Mammary epithelial cell (primary cell): ENCODE measurements at regions of chr12 and their contacts with region 1.

Region 1: DNA sequence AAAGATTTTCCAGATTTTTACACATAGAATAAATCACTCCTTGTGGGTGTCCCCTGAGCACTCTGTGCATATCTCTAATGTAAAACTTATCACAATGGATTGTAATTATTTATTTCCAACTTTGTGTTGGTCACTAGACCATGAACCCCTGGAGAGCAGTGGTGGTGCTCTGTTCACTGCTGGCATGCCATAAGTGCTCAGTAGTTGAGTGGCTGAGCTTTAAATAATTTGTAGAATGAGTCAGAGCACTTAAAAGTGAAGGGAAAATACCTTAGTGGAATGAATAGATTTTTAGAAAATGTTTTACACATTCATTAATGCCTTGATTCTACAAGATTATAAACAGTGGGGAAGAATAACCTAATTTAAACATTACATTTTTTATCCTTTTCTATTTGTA is 6.3 kb downstream of the MGAT4C start:
- DNase-seq: no peak
- H3K4me3 ChIP-seq: no peak overlapping the region
- H3K27ac ChIP-seq: no peak overlapping the region
- H3K4me1 ChIP-seq: no peaks in the 10 kb centered on the region
- H3K27me3 ChIP-seq: no peaks in the 10 kb centered on the region
- CTCF ChIP-seq: no peak

Region 2: DNA sequence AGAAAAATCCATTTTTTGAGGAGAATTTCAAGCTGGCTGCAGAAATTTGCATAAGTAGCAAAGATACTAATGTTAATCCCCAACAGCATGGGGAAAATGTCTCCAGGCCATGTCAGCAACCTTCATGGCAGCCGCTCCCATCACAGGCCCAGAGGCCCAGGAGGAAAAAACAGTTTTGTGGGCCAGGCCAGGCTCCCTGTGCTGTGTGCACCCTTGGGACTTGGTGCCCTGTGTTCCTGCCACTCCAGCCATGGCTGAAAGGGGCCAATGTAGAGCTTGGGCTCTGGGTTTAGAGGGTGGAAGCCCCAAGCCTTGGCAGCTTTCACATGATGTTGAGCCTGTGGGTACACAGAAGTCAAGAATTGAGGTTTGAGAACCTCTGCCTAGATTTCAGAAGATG is 70.0 kb before region 1 on chr12:
- CTCF ChIA-PET with region 1: no interaction called
- dilution Hi-C with region 1: no loop called
- in situ Hi-C with region 1: no loop called
- intact Hi-C with region 1: no loop called
- DNase-seq: no peak
- H3K4me3 ChIP-seq: no peak overlapping the region
- H3K27ac ChIP-seq: no peak overlapping the region
- H3K4me1 ChIP-seq: no peaks in the 10 kb centered on the region
- H3K27me3 ChIP-seq: no peaks in the 10 kb centered on the region
- CTCF ChIP-seq: no peak

Region 3: DNA sequence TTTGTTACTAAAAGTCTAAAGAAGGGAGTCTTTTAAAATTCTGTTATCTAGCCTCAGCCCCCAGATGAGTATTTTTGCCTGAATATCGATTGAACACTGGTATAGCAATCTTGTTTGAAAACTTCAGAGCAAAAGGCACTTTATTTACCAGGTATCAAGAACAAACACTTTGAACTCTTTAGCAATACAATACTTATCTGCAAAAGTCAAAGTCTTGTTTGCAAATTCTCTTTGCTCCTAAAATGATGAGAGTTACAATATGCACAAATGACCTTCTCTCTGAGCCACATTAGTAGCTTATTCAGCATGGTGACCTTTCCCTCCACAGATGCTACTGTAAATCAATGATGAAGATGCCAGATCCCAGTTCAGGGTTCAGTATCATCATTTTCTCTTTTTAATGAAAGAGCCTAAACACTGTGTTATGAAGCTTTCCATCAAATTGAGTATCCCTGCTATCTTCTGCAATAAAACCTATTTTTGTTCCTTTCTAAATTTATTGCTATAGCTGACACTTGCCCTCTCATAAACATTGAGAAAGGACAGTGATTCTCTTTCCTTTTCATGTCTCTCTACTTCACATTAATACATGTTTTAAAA is 759.0 kb after region 1 on chr12:
- CTCF ChIA-PET with region 1: interaction called, 11 read pairs
- dilution Hi-C with region 1: no loop called
- in situ Hi-C with region 1: no loop called
- intact Hi-C with region 1: no loop called
- DNase-seq: no peak
- H3K4me3 ChIP-seq: no peak overlapping the region
- H3K27ac ChIP-seq: no peak overlapping the region
- H3K4me1 ChIP-seq: no peaks in the 10 kb centered on the region
- H3K27me3 ChIP-seq: no peaks in the 10 kb centered on the region
- CTCF ChIP-seq: no peak